ENCODE measurements at regions of chr9 and their contacts with region 1.

Region 1: GRCh38 chr9:14314929-14315645 is 1.1 kb upstream of the NFIB start:
- DNase-seq: peak in 1 of 2 donors; percentile 96
- H3K4me3 ChIP-seq: peak overlapping the region; percentile 91 to 95
- H3K27ac ChIP-seq: peak overlapping the region; percentile 99 to 100
- H3K4me1 ChIP-seq: peaks cover 3 to 13% of the 10 kb centered on the region in 2 donors
- H3K27me3 ChIP-seq: no peaks in the 10 kb centered on the region
- CTCF ChIP-seq: peak in 1 of 3 experiments; percentile 12

Region 2: GRCh38 chr9:13485068-13485596 is 830.0 kb before region 1 on chr9:
- intact Hi-C with region 1: loop called (anchors 5 kb)
- DNase-seq: peak in 1 of 2 donors; percentile 87
- H3K4me3 ChIP-seq: peak overlapping the region in 1 of 2 donors; percentile 33
- H3K27ac ChIP-seq: peak overlapping the region; percentile 60 to 74
- H3K4me1 ChIP-seq: peaks cover 0 to 14% of the 10 kb centered on the region in 2 donors
- H3K27me3 ChIP-seq: no peaks in the 10 kb centered on the region
- CTCF ChIP-seq: peak in 2 of 3 experiments; percentile 8 to 14

Region 3: DNA sequence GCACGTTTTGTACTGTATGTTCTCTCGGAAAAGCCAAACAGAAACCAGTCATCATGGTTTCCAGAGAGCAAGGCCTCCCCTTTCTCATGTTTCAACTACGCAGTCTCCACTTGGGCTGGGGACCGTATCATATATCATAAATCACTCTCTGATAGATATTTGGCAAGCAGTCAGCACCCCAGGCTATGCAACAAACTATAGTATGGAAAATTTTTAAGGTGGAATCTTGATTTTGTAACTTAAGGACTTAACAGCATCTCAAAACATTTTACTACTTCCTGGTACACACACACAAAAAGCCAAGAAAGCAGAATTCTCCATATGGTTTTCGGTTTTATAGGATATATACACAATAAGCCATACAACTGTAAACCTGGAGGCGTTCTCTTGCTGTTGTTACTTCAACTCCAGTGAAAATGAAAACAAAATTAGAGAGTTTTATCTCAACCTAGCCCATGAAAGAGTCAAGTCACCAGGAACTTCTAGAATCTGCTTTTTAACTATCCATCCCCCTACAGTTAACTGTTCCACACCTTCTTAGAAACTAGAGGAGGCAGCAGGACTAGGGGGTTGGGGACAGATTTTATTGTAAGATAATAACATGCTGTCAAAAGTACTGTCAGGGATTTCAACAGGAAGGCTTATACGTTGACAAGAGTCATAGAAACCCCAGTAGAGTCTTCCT is 284.6 kb before region 1 on chr9:
- intact Hi-C with region 1: loop called (anchors 5 kb)
- DNase-seq: no peak
- H3K4me3 ChIP-seq: peak overlapping the region; percentile 39 to 58
- H3K27ac ChIP-seq: peak overlapping the region; percentile 80 to 84
- H3K4me1 ChIP-seq: peaks cover 6 to 24% of the 10 kb centered on the region in 2 donors
- H3K27me3 ChIP-seq: no peaks in the 10 kb centered on the region
- CTCF ChIP-seq: no peak

Region 4: GRCh38 chr9:14221558-14221957 is 93.5 kb before region 1 on chr9:
- intact Hi-C with region 1: loop called (anchors 5 kb)
- DNase-seq: peak in 1 of 2 donors; percentile 72
- H3K4me3 ChIP-seq: no peak overlapping the region
- H3K27ac ChIP-seq: peak overlapping the region; percentile 61 to 64
- H3K4me1 ChIP-seq: peaks cover 6 to 31% of the 10 kb centered on the region in 2 donors
- H3K27me3 ChIP-seq: no peaks in the 10 kb centered on the region
- CTCF ChIP-seq: no peak

Region 5: DNA sequence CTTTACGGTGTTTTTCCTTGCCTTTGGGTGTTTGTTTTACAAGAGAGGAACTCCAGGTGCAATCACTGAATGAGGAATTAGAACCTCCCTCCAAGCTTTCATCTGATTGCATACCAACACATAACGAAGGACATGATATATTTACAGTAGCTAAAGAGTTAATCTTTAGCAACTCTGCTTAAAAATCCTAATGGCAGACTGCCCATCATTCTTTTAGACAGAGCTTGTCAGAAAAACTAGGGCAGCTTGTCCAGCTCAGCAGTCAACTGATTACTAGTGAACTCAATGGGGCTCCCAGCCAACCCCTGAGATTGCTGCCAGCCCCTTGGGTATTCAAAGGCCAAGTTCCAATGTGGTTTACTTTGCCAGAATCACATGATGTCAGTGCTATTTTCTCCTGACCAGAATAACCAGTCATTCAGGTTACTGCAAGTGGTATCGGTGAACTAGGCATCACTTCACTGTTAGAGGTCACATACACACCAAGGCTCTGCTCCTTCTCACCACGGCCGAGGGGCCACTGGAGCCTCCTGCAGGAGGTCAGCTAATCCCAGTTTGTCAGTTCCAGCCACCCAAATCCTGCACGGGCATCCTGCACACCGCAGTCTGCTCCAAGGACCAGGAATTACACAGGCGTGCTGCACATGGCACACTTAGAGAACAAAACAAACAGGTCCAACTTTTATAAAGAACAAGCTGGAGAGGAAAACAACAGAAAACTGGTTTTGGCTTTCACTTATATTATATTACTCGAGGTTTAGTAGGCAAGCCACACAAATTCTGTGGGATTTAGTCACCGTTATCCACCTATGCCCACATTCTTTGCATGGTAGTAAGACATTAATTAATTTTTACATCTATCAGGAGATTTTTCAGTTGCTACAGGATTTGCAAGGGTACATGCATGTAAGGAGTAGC is 63.7 kb before region 1 on chr9:
- intact Hi-C with region 1: loop called (anchors 5 kb)
- DNase-seq: peak; percentile 10 to 91
- H3K4me3 ChIP-seq: peak overlapping the region in 1 of 2 donors; percentile 42
- H3K27ac ChIP-seq: peak overlapping the region; percentile 13 to 55
- H3K4me1 ChIP-seq: peaks cover 0 to 28% of the 10 kb centered on the region in 2 donors
- H3K27me3 ChIP-seq: no peaks in the 10 kb centered on the region
- CTCF ChIP-seq: no peak

Region 6: DNA sequence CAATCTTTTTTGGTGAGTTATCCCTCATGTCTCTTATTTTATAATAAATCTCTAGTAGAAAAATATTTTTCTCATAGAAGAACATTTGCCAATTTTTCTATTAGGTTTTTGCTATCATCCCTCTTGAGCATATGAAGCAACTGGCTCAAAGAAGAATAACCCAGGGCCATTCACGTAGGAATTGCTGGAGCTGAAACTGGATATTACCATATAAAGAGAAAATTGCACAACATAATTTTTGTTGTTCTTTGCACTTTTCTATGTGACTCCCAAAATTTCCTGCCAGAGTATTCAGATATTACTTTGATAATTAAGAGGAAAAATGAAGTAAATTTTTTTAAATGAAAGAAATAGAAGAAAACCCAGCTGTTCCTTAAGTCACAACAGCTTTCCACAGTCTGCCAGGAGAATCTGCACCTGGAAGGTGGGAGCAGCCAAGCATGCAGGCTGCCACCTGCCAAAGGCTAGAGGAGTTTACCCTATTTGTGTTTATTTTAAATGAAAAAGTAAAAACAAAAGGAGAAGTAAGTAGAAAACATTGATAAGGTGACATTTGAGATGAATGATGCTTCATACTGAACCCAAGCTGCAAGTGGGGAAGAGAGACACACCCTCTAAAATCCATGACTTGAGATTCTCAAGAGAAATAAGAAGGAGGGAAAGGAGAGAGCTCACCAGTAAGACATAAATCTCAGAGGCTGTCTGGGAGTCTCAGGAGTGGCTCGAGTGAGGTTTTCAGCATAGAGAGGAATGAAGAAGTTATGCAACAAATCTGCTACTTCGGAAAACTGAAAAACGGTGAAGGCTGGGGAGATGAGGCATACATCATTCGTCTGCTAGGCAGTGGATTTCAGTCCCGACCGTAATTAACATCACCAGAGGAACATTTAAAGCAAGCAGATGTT is 626.7 kb after region 1 on chr9:
- intact Hi-C with region 1: no loop called
- DNase-seq: no peak
- H3K4me3 ChIP-seq: no peak overlapping the region
- H3K27ac ChIP-seq: no peak overlapping the region
- H3K4me1 ChIP-seq: no peaks in the 10 kb centered on the region
- H3K27me3 ChIP-seq: no peaks in the 10 kb centered on the region
- CTCF ChIP-seq: no peak